Activated CD4-positive, alpha-beta memory T cell treated with anti-CD3 and anti-CD28 coated beads for 36 hours (primary cell): ENCODE measurements at regions of chr2 and their contacts with region 1.

Region 1: GRCh38 chr2:218898109-218898878 is 17.6 kb downstream of the WNT10A start:
- DNase-seq: peak; percentile 88
- H3K4me3 Mint-ChIP-seq: peak overlapping the region; percentile 58
- H3K27ac Mint-ChIP-seq: peak overlapping the region; percentile 72
- H3K4me1 Mint-ChIP-seq: peaks cover 43% of the 10 kb centered on the region
- H3K27me3 Mint-ChIP-seq: peaks cover 16% of the 10 kb centered on the region

Region 2: DNA sequence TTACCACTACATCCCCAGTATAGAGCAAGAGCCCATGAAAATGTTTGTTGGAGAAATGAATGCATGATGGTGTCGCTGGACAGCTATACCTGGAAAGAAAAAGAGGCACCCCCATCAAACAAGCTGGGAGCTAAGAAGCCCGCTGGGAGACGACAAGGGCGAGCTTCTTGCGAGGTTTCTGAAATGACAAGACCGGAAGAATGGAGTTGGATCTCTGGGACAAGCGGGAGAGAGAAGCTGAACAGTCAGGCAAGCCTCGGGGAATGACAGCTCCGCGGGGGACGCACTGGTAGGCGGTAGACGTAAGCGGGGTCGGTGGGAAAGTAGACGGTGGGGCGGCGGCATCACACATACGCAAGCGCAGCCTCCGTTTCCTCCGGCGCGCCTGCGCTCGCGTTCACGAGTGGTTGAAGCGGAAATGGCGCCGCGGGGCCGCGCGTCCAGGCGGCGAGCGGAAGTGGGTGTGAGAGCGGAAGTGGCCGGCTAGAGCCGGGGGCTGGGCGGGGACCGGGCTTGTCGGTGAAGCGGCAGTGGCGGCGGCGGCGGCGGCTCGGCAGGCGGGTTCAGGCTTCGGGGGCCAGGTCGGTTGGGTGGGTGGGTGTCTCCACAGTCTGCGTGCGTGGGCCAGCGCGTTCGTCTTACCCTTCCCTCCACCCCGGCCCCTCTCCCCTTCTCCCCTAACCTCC is 681.5 kb before region 1 on chr2 and contains the start of gene ARPC2:
- CTCF ChIA-PET with region 1: no interaction called
- POLR2A ChIA-PET with region 1: no interaction called
- intact Hi-C with region 1: loop called (anchors 5 kb)
- DNase-seq: peak; percentile 97
- H3K4me3 Mint-ChIP-seq: peak within 1 kb of the TSS; percentile 83
- H3K27ac Mint-ChIP-seq: peak within 1 kb of the TSS; percentile 91
- H3K4me1 Mint-ChIP-seq: peaks cover 34% of the 10 kb centered on the region
- H3K27me3 Mint-ChIP-seq: no peaks in the 10 kb centered on the region
- total RNA-seq, gene ARPC2: 564 to 570 TPM

Region 3: DNA sequence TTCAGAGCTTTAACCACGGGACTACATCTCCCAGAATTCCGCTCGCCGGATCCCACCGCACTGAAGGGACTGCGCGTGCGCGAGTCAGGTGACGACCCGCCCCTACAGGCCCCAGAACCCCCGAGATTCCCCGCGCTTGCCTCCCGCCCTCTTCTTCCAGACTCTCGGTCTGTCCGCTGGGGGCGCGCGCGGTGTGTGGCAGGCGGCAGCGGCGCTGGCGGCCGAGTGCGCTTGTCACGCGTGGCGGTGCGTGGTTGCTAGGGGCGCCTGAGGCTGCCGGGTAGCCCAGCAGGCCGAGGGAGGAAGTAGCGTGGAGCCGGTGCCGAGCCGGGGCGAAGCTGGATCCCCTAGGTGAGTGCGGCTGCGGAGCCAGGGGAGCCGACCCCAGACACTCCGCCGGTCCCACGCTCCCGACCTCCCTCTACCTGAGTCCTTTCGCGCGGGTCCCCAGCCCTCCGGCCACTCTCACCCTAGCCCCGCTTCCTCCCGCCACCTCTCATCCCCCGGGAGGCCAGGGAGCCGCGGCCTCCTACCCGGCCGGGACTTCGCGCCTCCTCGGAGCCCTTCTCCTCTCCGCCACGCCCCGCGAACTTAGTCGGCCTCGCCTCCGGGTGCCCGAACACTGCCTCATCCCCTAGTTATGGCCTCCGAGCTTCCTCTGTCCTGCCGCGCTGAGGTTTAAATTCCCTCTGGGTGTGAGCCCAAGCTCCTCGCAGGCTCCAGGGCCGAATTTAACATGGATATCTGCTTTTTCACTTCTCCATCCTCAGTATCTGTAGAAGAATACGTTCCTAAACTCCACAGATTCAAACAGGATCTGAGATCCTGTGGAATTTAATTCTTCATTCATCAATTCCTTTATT is 187.4 kb before region 1 on chr2 and contains the start of gene TTLL4:
- CTCF ChIA-PET with region 1: interaction called, 4 read pairs
- POLR2A ChIA-PET with region 1: no interaction called
- intact Hi-C with region 1: loop called (anchors 1 kb)
- DNase-seq: peak; percentile 99
- H3K4me3 Mint-ChIP-seq: peak within 1 kb of the TSS; percentile 88
- H3K27ac Mint-ChIP-seq: peak within 1 kb of the TSS; percentile 72
- H3K4me1 Mint-ChIP-seq: peaks cover 20% of the 10 kb centered on the region
- H3K27me3 Mint-ChIP-seq: no peaks in the 10 kb centered on the region
- total RNA-seq, gene TTLL4: 30.1 to 32.1 TPM

Region 4: DNA sequence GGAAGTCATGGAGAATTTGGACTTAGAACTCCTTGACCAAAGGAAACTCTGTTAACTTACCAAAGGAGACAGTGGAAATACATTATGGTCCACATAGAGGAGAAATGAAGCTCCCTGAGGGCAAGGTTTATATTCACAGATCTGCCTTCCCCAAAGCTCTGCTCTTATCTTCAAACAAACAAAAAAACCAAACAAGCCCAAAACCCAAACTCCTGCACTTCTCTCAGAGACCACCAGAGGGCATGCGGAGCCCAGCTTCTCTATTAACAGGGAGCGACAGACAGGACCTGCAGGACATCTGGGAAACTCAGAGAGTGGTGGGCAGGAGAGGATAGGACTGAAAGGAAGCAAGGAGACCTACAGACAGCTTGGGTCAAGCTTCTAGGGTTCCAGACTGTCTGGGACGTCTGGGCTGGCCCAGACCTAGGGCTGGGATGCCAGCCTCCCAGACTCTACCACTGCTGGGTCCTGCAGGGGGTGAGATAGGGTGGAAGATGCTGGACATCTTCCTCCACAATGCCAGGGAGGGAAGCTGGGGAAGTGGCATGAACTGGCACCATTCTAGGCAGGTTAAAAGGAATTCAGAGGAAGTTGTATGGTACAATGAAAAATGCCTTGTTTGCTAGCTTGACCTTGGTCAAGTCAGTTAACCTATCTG is 21.6 kb before region 1 on chr2:
- CTCF ChIA-PET with region 1: interaction called, 1,400 read pairs
- POLR2A ChIA-PET with region 1: interaction called, 215 read pairs
- intact Hi-C with region 1: loop called (anchors 1 kb)
- DNase-seq: peak; percentile 82
- H3K4me3 Mint-ChIP-seq: no peak overlapping the region
- H3K27ac Mint-ChIP-seq: peak overlapping the region; percentile 3
- H3K4me1 Mint-ChIP-seq: peaks cover 38% of the 10 kb centered on the region
- H3K27me3 Mint-ChIP-seq: peaks cover 32% of the 10 kb centered on the region

Region 5: GRCh38 chr2:218979846-218980734 is 81.8 kb after region 1 on chr2:
- CTCF ChIA-PET with region 1: interaction called, 28 read pairs
- POLR2A ChIA-PET with region 1: interaction called, 3 read pairs
- intact Hi-C with region 1: no loop called
- DNase-seq: peak; percentile 89
- H3K4me3 Mint-ChIP-seq: peak overlapping the region; percentile 52
- H3K27ac Mint-ChIP-seq: no peak overlapping the region
- H3K4me1 Mint-ChIP-seq: peaks cover 28% of the 10 kb centered on the region
- H3K27me3 Mint-ChIP-seq: peaks cover 62% of the 10 kb centered on the region

Region 6: GRCh38 chr2:219388127-219388844 is 490.0 kb after region 1 on chr2:
- CTCF ChIA-PET with region 1: no interaction called
- POLR2A ChIA-PET with region 1: interaction called, 3 read pairs
- intact Hi-C with region 1: loop called (anchors 5 kb)
- DNase-seq: peak; percentile 99
- H3K4me3 Mint-ChIP-seq: peak overlapping the region; percentile 69
- H3K27ac Mint-ChIP-seq: peak overlapping the region; percentile 66
- H3K4me1 Mint-ChIP-seq: peaks cover 16% of the 10 kb centered on the region
- H3K27me3 Mint-ChIP-seq: no peaks in the 10 kb centered on the region